GM10248 (cell line): ENCODE measurements at regions of chr3 and their contacts with region 1.

Region 1: DNA sequence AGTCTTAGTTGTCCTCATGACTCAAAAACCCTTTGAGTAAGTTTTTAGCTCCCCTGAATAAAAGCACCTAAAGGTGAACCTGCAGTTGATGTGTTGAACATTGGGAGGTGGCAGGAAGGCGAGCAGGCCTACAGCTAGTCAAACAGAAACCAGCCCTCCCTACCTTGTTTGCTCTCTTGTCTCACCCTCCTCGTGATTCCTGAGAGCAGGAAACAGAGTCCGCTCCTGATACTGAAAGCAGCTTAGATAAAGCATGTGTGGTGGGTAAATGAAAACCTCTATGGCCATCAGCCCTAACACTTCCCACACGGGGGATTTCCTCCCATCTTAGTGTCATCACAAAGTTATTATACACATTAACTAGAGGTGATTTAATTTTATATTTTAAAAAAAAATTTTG is 21.8 kb upstream of the CLDN18 start:
- DNase-seq: peak; percentile 52
- CTCF ChIP-seq: no peak

Region 2: GRCh38 chr3:137970914-137971831 is 17.0 kb before region 1 on chr3:
- CTCF ChIA-PET with region 1: interaction called, 30 read pairs
- POLR2A ChIA-PET with region 1: no interaction called
- DNase-seq: peak; percentile 57
- CTCF ChIP-seq: peak; percentile 88